Activated naive CD4-positive, alpha-beta T cell treated with anti-CD3 and anti-CD28 coated beads, Interleukin-2, amount 10 ng/mL, durations not matched to agents 7 days and 5 days (primary cell): ENCODE measurements at regions of chr10 and their contacts with region 1.

Region 1: DNA sequence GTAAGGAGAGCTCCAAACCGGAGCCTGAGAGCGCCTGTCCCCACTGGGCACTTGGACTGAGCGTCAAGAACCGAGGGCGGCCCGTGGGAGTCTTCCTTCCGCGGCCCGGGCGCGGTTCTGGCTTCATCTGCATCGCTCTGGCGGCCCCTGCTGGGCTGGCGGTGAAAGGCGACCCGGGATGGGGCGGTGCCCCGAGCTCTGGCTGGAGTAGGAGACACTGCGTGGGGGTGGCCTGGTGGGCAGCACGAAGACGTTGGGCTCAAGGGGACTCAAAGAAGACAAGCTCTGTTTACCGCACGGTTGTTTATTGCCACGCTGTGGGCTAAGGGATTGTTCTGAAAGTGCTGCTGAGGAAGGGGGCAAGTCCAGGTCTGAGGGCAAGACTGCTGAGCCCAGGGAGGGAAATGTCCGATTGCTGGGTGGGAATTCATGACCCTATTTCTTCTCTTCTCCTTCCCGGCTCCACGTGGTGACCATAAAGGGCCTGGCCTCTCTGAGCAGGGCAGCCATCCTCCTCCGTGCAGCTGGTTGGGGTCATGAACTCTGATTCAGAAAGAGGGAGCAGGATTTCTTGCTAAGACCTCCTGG is 29.8 kb downstream of the PLAU start:
- DNase-seq: peak; percentile 89
- H3K4me3 Mint-ChIP-seq: no peak overlapping the region
- H3K27ac Mint-ChIP-seq: peak overlapping the region; percentile 50
- H3K4me1 Mint-ChIP-seq: peaks cover 23% of the 10 kb centered on the region
- H3K27me3 Mint-ChIP-seq: peaks cover 53% of the 10 kb centered on the region

Region 2: GRCh38 chr10:73879296-73880173 is 61.2 kb before region 1 on chr10:
- CTCF ChIA-PET with region 1: interaction called, 511 read pairs
- DNase-seq: peak; percentile 96
- H3K4me3 Mint-ChIP-seq: no peak overlapping the region
- H3K27ac Mint-ChIP-seq: peak overlapping the region; percentile 76
- H3K4me1 Mint-ChIP-seq: peaks cover 47% of the 10 kb centered on the region
- H3K27me3 Mint-ChIP-seq: peaks cover 14% of the 10 kb centered on the region

Region 3: DNA sequence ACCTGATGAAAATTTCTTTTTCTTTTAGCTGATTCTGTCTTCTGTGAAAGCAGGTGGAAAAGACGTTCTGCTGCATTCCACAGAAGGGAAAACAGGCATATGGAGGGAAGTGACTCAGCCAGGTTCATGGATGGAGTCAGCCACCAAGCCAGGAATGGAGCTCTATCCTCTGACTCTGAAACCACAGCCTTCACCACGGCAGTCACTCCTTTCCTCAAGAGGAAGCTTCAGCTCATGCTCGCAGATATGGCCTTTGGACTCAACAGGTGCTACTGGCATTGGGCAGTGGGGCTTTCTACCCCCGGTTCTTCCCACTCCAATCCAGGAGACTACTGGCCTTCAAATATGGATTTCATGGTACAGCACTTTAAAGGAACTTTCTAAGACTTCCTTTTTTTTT is 41.3 kb before region 1 on chr10:
- CTCF ChIA-PET with region 1: interaction called, 19 read pairs
- DNase-seq: no peak
- H3K4me3 Mint-ChIP-seq: no peak overlapping the region
- H3K27ac Mint-ChIP-seq: no peak overlapping the region
- H3K4me1 Mint-ChIP-seq: no peaks in the 10 kb centered on the region
- H3K27me3 Mint-ChIP-seq: peaks cover 61% of the 10 kb centered on the region

Region 4: DNA sequence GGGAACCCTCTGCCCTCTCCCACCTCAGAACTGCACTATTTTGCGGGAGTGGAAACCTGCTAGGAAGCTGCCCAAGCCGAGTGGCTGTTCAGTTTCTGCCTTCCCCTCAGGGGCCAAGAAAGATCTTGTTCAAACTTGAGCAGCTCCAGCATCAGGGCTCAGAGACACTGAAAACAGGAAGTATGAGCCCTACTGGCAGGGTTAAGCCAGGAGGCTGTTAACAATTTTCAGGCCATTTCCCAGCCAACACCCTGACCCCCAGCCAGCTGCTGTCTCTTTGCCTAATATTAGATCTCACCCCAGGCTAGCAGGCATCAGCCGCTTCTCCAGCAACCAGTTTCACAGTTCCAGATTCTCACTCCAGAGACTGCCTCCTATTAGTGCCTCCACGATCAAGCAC is 20.6 kb before region 1 on chr10:
- CTCF ChIA-PET with region 1: interaction called, 10 read pairs
- DNase-seq: no peak
- H3K4me3 Mint-ChIP-seq: no peak overlapping the region
- H3K27ac Mint-ChIP-seq: no peak overlapping the region
- H3K4me1 Mint-ChIP-seq: peaks cover 33% of the 10 kb centered on the region
- H3K27me3 Mint-ChIP-seq: peaks cover 93% of the 10 kb centered on the region

Region 5: GRCh38 chr10:73979809-73980433 is 39.2 kb after region 1 on chr10:
- CTCF ChIA-PET with region 1: no interaction called
- DNase-seq: no peak
- H3K4me3 Mint-ChIP-seq: no peak overlapping the region
- H3K27ac Mint-ChIP-seq: no peak overlapping the region
- H3K4me1 Mint-ChIP-seq: peaks cover 27% of the 10 kb centered on the region
- H3K27me3 Mint-ChIP-seq: peaks cover 46% of the 10 kb centered on the region

Region 6: DNA sequence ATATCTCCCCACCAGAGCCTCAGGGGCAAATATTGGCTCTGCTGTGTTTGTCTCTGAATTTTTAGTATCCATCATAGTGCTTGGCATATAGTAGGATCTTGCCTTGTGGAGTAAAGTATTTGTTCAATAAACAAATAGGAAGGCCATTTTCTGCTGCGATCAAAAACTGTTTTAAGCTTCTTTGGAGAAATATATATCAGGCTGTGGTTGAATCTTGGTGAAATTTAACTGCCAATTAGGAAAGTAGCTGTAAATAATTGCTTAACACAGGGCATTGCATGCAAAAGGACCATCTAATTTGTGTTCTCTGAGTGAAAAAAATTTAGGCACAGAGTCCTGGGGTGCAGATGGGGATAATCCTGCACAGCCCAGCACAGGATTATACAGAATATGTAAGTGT is 72.3 kb after region 1 on chr10:
- CTCF ChIA-PET with region 1: no interaction called
- DNase-seq: no peak
- H3K4me3 Mint-ChIP-seq: no peak overlapping the region
- H3K27ac Mint-ChIP-seq: no peak overlapping the region
- H3K4me1 Mint-ChIP-seq: peaks cover 36% of the 10 kb centered on the region
- H3K27me3 Mint-ChIP-seq: no peaks in the 10 kb centered on the region

Region 7: GRCh38 chr10:74081192-74081803 is 140.6 kb after region 1 on chr10:
- CTCF ChIA-PET with region 1: interaction called, 17 read pairs
- DNase-seq: peak; percentile 58
- H3K4me3 Mint-ChIP-seq: no peak overlapping the region
- H3K27ac Mint-ChIP-seq: no peak overlapping the region
- H3K4me1 Mint-ChIP-seq: peaks cover 21% of the 10 kb centered on the region
- H3K27me3 Mint-ChIP-seq: no peaks in the 10 kb centered on the region

Region 8: GRCh38 chr10:74332398-74332797 is 391.7 kb after region 1 on chr10:
- CTCF ChIA-PET with region 1: no interaction called
- DNase-seq: no peak
- H3K4me3 Mint-ChIP-seq: no peak overlapping the region
- H3K27ac Mint-ChIP-seq: no peak overlapping the region
- H3K4me1 Mint-ChIP-seq: no peaks in the 10 kb centered on the region
- H3K27me3 Mint-ChIP-seq: no peaks in the 10 kb centered on the region